ENCODE measurements at regions of chr12 and their contacts with region 1.

Region 1: DNA sequence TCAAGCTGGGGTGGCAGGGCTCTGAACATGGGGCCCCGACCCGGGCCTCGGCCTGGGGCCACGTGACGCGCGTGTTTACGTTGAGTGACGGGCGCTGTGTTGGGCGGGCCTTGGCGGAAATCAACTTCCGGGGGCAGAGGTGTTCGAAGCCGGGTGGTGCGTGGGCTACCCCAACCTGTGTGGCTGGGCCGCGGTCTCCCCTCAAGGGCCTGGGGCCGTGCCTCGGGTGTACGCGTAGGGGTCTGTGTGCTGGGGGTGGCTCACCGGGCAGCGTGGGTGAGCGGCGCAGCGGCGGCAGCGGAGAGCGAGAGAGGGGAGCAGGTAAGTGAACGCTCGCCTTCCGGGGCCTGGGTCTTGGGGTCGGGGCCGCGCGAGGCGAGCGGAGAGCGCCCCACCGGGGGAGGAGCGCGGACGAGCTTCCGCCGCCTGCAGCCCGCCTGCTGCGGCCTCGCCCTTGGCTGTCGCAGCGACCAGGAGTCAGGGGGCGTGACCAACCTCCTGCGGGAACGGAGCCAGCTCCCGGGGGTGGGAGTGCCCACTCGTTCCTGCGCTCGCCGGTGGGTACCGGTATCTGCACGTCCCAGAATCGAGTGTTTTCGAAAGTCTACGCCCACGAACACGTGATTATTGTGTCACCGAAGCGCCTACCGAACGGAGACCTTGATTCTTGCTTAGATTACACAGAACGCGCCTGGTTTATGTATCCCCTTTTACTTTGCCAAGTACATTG is at the start of gene CCDC91:
- DNase-seq: peak; percentile 90 to 96 (median 93)
- H3K4me3 ChIP-seq: peak within 1 kb of the TSS; percentile 78 to 94
- H3K4me3 Mint-ChIP-seq: peak within 1 kb of the TSS; percentile 90 to 99 (median 96)
- H3K27ac ChIP-seq: peak within 1 kb of the TSS; percentile 95
- H3K27ac Mint-ChIP-seq: peak within 1 kb of the TSS; percentile 98 to 100 (median 100)
- H3K4me1 ChIP-seq: peaks cover 34% of the 10 kb centered on the region
- H3K4me1 Mint-ChIP-seq: peaks cover 38 to 69% (median 53%) of the 10 kb centered on the region in 4 donors
- H3K27me3 ChIP-seq: no peaks in the 10 kb centered on the region
- H3K27me3 Mint-ChIP-seq: no peaks in the 10 kb centered on the region
- total RNA-seq, gene CCDC91: 83.9 to 88.4 TPM

Region 2: GRCh38 chr12:27710592-27711316 is 479.7 kb before region 1 on chr12 and contains the start of gene MRPS35:
- CTCF ChIA-PET with region 1: no interaction called
- POLR2A ChIA-PET with region 1: interaction called, 5 read pairs
- intact Hi-C with region 1: loop called (anchors 1 kb)
- DNase-seq: peak; percentile 90 to 92 (median 91)
- H3K4me3 ChIP-seq: peak within 1 kb of the TSS; percentile 52 to 78
- H3K4me3 Mint-ChIP-seq: peak within 1 kb of the TSS; percentile 92 to 100 (median 98)
- H3K27ac ChIP-seq: peak within 1 kb of the TSS; percentile 70
- H3K27ac Mint-ChIP-seq: peak within 1 kb of the TSS; percentile 90 to 99 (median 97)
- H3K4me1 ChIP-seq: peaks cover 25% of the 10 kb centered on the region
- H3K4me1 Mint-ChIP-seq: peaks cover 15 to 44% (median 29%) of the 10 kb centered on the region in 4 donors
- H3K27me3 ChIP-seq: no peaks in the 10 kb centered on the region
- H3K27me3 Mint-ChIP-seq: no peaks in the 10 kb centered on the region
- total RNA-seq, gene MRPS35: 20.3 to 21.1 TPM

Region 3: DNA sequence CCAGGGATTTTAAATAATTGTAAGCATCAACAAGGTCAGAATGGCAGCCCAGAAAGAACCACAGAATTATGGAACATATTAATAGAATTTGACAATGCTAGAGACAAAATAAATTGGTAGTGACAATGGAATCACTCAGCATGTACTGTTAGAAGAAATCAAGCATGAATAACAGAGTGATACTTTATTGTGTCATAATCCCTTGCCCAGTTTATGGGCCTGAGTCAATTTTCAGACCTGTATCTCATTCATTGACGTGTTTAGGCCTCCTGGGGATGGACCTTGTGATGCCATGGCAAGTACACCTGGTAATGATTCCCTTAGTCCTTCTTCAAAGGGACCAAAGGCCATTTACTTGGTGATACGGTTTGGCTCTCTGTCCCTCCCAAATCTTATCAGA is 13.0 kb before region 1 on chr12:
- CTCF ChIA-PET with region 1: no interaction called
- POLR2A ChIA-PET with region 1: no interaction called
- intact Hi-C with region 1: no loop called
- DNase-seq: no peak
- H3K4me3 ChIP-seq: no peak overlapping the region
- H3K4me3 Mint-ChIP-seq: no peak overlapping the region
- H3K27ac ChIP-seq: no peak overlapping the region
- H3K27ac Mint-ChIP-seq: no peak overlapping the region
- H3K4me1 ChIP-seq: no peaks in the 10 kb centered on the region
- H3K4me1 Mint-ChIP-seq: no peaks in the 10 kb centered on the region
- H3K27me3 ChIP-seq: no peaks in the 10 kb centered on the region
- H3K27me3 Mint-ChIP-seq: peaks cover 0 to 2% of the 10 kb centered on the region in 2 donors

Region 4: GRCh38 chr12:28217805-28218204 is 27.3 kb after region 1 on chr12:
- CTCF ChIA-PET with region 1: interaction called, 6 read pairs
- POLR2A ChIA-PET with region 1: interaction called, 27 read pairs
- intact Hi-C with region 1: loop called (anchors 2 kb)
- DNase-seq: peak in 1 of 5 donors; percentile 11
- H3K4me3 ChIP-seq: no peak overlapping the region
- H3K4me3 Mint-ChIP-seq: peak overlapping the region in 5 of 8 donors; percentile 17 to 83 (median 34)
- H3K27ac ChIP-seq: no peak overlapping the region
- H3K27ac Mint-ChIP-seq: peak overlapping the region; percentile 8 to 84 (median 23)
- H3K4me1 ChIP-seq: peaks cover 35% of the 10 kb centered on the region
- H3K4me1 Mint-ChIP-seq: peaks cover 43 to 63% (median 54%) of the 10 kb centered on the region in 4 donors
- H3K27me3 ChIP-seq: no peaks in the 10 kb centered on the region
- H3K27me3 Mint-ChIP-seq: no peaks in the 10 kb centered on the region

Region 5: DNA sequence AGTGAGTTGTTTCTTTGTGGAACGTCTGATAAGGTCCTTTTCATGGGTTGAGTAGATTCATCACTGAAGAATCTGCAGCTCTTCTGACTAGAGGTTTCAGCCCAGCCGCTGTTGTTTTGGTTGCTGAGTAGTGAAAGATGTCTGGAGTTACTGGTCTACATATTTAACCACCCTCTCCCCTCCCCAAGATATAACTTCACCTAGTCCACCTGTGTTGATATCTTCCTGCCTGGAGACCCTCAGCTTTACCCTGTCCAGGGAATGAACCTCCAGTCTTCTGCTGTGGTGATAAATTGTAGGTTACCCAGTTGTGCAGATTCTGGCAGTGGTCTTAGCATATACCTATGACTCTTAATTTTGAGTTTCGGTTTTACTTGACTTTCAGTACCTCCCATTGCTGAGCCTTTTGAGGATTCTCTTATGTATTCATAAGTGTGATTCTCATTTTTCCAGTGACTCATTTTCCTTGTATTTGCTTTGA is 62.7 kb after region 1 on chr12:
- CTCF ChIA-PET with region 1: interaction called, 3 read pairs
- POLR2A ChIA-PET with region 1: interaction called, 9 read pairs
- intact Hi-C with region 1: loop called (anchors 5 kb)
- DNase-seq: peak; percentile 9 to 46 (median 42)
- H3K4me3 ChIP-seq: peak overlapping the region; percentile 22 to 31
- H3K4me3 Mint-ChIP-seq: peak overlapping the region; percentile 79 to 92 (median 86)
- H3K27ac ChIP-seq: peak overlapping the region; percentile 44
- H3K27ac Mint-ChIP-seq: peak overlapping the region; percentile 77 to 93 (median 90)
- H3K4me1 ChIP-seq: peaks cover 59% of the 10 kb centered on the region
- H3K4me1 Mint-ChIP-seq: peaks cover 50 to 58% (median 55%) of the 10 kb centered on the region in 4 donors
- H3K27me3 ChIP-seq: no peaks in the 10 kb centered on the region
- H3K27me3 Mint-ChIP-seq: no peaks in the 10 kb centered on the region